H1 (cell line): ENCODE measurements at regions of chr12 and their contacts with region 1.

Region 1: GRCh38 chr12:92717202-92717601 is 14.4 kb downstream of the PLEKHG7 start:
- DNase-seq: no peak
- H3K4me3 ChIP-seq: no peak overlapping the region
- H3K27ac ChIP-seq: no peak overlapping the region
- H3K4me1 ChIP-seq: peaks cover 0 to 2% (median 0%) of the 10 kb centered on the region in 4 experiments; a peak in 1 of 7 replicates
- H3K27me3 ChIP-seq: no peaks in the 10 kb centered on the region
- CTCF ChIP-seq: peak in 2 of 3 experiments; percentile 56 to 68; a peak in 3 of 4 replicates
- EP300 ChIP-seq: no peak
- POLR2A ChIP-seq: no peak
- RAD21 ChIP-seq: peak; percentile 59 to 79

Region 2: DNA sequence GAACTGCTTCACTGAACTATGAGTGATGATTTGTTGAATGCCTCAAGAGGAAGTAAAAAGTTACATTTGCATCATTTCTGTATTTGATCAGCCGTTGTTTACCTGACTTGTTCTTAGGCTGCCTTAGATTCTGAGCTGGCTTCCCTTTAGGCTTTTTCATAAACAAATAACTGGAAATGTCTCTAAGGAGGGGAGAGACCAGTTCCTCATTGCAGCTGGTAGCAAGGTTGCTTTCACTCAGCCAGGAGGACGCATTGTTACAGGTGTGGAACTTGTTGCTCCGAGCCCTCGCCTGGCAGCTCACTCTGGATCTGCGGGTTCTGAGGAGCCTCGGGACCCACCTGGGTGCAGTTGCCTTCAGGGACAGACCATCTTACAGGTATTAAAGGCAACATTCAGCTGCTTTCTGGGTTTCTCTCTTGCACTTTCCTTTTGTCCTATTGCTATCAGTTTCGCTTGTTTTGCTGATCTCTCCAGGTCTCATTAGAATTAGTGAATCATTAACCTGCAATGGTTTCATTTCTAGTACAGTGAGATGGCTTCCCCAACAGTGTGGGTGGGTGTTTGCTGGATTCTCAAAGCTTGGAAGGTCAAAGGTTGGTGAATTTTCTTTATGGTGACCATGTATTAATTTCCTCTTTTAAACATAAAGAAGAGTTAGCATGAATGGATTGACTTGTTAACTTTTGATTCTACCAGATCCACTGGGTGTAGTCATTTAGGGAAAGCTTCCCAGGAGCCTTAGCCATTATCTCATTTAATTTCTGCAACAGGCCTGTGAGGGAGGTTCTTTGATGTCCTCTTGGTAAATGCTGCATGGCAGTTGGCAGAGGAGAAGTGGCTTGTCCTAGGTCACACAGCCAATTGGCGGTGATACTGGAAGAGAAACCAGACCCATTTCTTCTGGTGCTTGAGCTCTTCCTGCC is 14.2 kb before region 1 on chr12 and contains the start of gene PLEKHG7:
- CTCF ChIA-PET with region 1: interaction called, 19 read pairs
- POLR2A ChIA-PET with region 1: no interaction called
- DNase-seq: no peak
- H3K4me3 ChIP-seq: no peak within 1 kb of the TSS
- H3K27ac ChIP-seq: no peak within 1 kb of the TSS
- H3K4me1 ChIP-seq: peaks cover 0 to 4% (median 1%) of the 10 kb centered on the region in 4 experiments; a peak in 3 of 7 replicates
- H3K27me3 ChIP-seq: no peaks in the 10 kb centered on the region
- CTCF ChIP-seq: no peak
- EP300 ChIP-seq: no peak
- POLR2A ChIP-seq: no peak
- RAD21 ChIP-seq: no peak
- total RNA-seq, gene PLEKHG7: not detected in 2 replicates

Region 3: DNA sequence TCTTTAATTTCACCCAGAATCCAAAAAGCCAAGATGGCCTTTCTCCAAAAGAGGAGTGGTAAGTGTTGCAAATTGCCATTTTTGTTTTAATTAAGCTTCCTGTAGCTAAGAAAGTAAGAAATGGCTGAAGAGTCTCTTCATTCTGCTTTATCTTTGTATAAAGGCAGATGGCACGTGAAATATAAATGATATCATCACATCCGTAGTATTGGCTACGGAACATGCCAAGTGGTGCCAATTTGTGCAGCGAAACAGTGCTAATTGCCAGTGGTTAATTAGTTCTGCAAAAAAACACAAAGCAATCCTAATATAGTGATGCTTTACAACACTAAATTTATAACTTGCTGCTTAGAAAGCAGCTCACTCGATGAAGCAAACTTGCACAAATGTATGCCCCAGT is 15.0 kb after region 1 on chr12:
- CTCF ChIA-PET with region 1: interaction called, 11 read pairs
- POLR2A ChIA-PET with region 1: no interaction called
- DNase-seq: no peak
- H3K4me3 ChIP-seq: no peak overlapping the region
- H3K27ac ChIP-seq: no peak overlapping the region
- H3K4me1 ChIP-seq: no peaks in the 10 kb centered on the region
- H3K27me3 ChIP-seq: no peaks in the 10 kb centered on the region
- CTCF ChIP-seq: no peak
- EP300 ChIP-seq: no peak
- POLR2A ChIP-seq: no peak
- RAD21 ChIP-seq: no peak